ENCODE measurements at regions of chr13 and their contacts with region 1.

Region 1: GRCh38 chr13:21817878-21818277 is 147.0 kb downstream of the FGF9 start:
- DNase-seq: no peak
- H3K4me3 ChIP-seq: no peak overlapping the region
- H3K27ac ChIP-seq: no peak overlapping the region
- H3K4me1 ChIP-seq: no peaks in the 10 kb centered on the region
- H3K27me3 ChIP-seq: no peaks in the 10 kb centered on the region
- CTCF ChIP-seq: no peak
- EP300 ChIP-seq: no peak
- POLR2A ChIP-seq: no peak

Region 2: DNA sequence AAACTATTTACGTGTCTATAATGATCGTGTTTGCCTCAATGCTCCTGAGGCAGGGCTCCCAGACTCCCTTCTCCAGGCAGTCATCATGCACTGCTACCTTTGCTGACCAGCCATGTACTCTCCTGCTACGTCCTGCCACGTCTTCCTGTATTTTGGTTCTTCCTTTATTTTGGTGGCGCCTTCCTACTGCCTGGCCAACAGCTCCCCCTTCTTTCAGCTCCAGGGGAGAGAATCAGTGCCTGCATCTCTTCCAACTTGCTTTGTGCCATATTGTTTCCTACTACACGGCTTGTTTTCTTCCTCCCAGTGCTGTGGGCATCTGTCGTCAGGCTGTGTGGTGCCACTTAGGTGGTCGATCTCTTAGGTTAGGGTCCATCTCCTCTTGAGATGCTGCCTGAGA is 50.9 kb before region 1 on chr13:
- intact Hi-C with region 1: loop called in 1 of 4 experiments (anchors 2 kb)
- DNase-seq: no peak
- H3K4me3 ChIP-seq: no peak overlapping the region
- H3K27ac ChIP-seq: no peak overlapping the region
- H3K4me1 ChIP-seq: no peaks in the 10 kb centered on the region
- H3K27me3 ChIP-seq: no peaks in the 10 kb centered on the region
- CTCF ChIP-seq: no peak
- EP300 ChIP-seq: no peak
- POLR2A ChIP-seq: no peak

Region 3: DNA sequence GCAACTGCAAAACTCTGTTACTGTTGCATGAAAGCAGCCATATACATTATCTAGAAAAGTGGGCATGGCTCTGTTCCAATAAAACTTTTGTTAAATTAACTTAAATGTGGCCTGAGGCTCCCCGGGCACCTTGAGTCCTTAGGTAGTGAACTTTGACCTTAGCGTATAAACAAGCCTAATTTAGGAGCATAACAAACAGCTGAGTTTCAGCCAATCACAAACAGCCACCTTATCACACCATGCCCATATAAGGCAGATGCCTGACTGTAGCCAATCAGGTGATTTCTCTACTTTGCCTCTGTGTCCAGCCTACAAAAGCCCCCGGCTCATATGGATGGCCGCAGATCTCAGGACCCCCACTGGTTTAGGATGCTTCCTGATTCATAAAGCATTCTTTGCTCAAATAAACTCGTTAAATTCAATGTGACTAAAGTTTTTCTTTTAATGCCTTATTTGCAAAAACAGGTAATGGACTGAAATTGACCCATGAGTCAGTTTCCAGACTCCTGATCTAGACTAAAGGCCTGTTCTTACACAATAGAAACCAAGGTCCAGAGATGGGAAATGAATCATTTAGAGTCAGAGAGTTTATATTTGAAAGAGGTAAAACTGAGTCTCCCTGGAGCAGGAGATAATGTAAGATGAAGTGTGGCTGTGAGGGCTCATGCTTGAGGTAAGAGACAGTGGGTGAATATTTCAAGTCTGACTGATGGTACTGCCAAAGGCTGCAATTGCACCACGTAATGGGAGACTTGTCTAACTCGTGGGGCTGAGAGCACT is 16.9 kb before region 1 on chr13:
- intact Hi-C with region 1: no loop called
- DNase-seq: no peak
- H3K4me3 ChIP-seq: no peak overlapping the region
- H3K27ac ChIP-seq: no peak overlapping the region
- H3K4me1 ChIP-seq: no peaks in the 10 kb centered on the region
- H3K27me3 ChIP-seq: no peaks in the 10 kb centered on the region
- CTCF ChIP-seq: no peak
- EP300 ChIP-seq: no peak
- POLR2A ChIP-seq: no peak

Measured in ovary (tissue), 10 donors.